ENCODE measurements at regions of chr19 and their contacts with region 1.

Region 1: DNA sequence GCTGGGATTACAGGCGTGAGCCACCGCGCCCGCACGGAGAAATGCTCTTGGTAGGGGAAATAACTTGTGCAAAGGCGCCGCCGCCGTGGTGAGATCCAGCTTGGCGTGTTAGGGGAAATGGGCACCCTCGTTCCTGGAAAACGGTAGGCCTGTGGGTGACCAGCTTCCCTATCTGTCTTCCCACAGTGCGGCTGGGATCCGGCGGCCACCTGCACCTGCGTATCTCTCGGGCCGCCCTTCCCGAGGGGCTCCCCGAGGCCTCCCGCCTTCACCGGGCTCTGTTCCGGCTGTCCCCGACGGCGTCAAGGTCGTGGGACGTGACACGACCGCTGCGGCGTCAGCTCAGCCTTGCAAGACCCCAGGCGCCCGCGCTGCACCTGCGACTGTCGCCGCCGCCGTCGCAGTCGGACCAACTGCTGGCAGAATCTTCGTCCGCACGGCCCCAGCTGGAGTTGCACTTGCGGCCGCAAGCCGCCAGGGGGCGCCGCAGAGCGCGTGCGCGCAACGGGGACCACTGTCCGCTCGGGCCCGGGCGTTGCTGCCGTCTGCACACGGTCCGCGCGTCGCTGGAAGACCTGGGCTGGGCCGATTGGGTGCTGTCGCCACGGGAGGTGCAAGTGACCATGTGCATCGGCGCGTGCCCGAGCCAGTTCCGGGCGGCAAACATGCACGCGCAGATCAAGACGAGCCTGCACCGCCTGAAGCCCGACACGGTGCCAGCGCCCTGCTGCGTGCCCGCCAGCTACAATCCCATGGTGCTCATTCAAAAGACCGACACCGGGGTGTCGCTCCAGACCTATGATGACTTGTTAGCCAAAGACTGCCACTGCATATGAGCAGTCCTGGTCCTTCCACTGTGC is 2.4 kb downstream of the GDF15 start:
- DNase-seq: peak in 1 of 2 experiments; percentile 98
- H3K4me3 ChIP-seq: peak overlapping the region in 3 of 4 experiments; percentile 17 to 46 (median 20); a peak in 5 of 8 replicates
- H3K27ac ChIP-seq: no peak overlapping the region
- H3K4me1 ChIP-seq: peaks cover 3 to 4% (median 3%) of the 10 kb centered on the region in 4 experiments
- H3K27me3 ChIP-seq: peaks cover 0 to 23% (median 14%) of the 10 kb centered on the region in 4 experiments; a peak in 6 of 7 replicates
- CTCF ChIP-seq: peak; percentile 97 to 99 (median 98)
- EP300 ChIP-seq: no peak
- POLR2A ChIP-seq: no peak
- RAD21 ChIP-seq: peak; percentile 52 to 73; a peak in 3 of 4 replicates

Region 2: GRCh38 chr19:18340190-18340989 is 47.9 kb before region 1 on chr19 and contains the start of gene PGPEP1:
- CTCF ChIA-PET with region 1: interaction called, 15 read pairs
- POLR2A ChIA-PET with region 1: interaction called, 4 read pairs
- DNase-seq: peak in 1 of 2 experiments; percentile 97
- H3K4me3 ChIP-seq: peak within 1 kb of the TSS; percentile 55 to 85 (median 62)
- H3K27ac ChIP-seq: no peak within 1 kb of the TSS
- H3K4me1 ChIP-seq: peaks cover 0 to 11% (median 7%) of the 10 kb centered on the region in 4 experiments; a peak in 6 of 7 replicates
- H3K27me3 ChIP-seq: 0 out of 7 replicates have a peak, but pooled peaks cover 0 to 2% (median 0%) of the 10 kb centered on the region in 4 experiments
- CTCF ChIP-seq: no peak
- EP300 ChIP-seq: no peak
- POLR2A ChIP-seq: 0 out of 3 replicates have a peak, but pooled peaks of 1 of the 2 experiments have one; percentile 26
- RAD21 ChIP-seq: no peak
- total RNA-seq, gene PGPEP1: 33.2 and 33.4 TPM in 2 replicates

Region 3: DNA sequence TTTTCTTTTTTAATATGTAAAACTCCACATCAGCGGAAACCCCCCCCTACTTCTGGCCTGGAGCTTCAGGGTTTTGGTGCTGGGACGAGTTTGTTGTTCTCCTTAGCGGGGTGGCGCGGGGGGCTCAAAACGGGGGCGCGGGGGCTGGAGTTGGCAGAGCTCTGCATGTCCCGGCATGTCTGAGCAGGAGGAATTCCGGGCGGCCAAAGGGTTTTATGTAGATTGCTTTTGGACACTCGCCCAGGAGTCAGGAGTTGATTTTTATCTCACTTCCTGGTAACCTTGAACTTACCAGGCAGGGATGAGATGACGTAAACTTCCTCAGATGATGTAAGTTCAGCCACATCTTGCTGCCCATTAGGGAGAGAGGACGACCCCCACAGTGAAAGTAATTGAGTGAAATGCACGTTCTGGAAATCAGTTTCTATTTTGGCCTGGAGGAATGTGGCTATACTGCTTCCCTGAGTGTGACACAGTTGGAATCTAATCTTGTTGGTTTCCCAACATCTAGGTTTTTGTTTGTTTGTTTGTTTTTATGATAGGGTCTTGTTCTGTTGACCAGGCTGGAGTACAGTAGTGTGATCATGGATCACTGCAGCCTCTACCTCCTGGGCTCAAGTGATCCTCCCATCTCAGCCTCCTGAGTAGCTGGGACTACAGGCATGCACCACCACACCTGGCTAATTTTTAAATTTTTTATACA is 23.4 kb before region 1 on chr19:
- CTCF ChIA-PET with region 1: interaction called, 69 read pairs
- POLR2A ChIA-PET with region 1: interaction called, 6 read pairs
- DNase-seq: no peak
- H3K4me3 ChIP-seq: no peak overlapping the region
- H3K27ac ChIP-seq: peak overlapping the region; percentile 87; the same call in 1 of the 2 replicates
- H3K4me1 ChIP-seq: peaks cover 1 to 14% (median 8%) of the 10 kb centered on the region in 4 experiments; a peak in 5 of 7 replicates
- H3K27me3 ChIP-seq: no peaks in the 10 kb centered on the region
- CTCF ChIP-seq: no peak
- EP300 ChIP-seq: 0 out of 3 replicates have a peak, but pooled peaks of 1 of the 2 experiments have one; percentile 14
- POLR2A ChIP-seq: no peak
- RAD21 ChIP-seq: no peak

Region 4: DNA sequence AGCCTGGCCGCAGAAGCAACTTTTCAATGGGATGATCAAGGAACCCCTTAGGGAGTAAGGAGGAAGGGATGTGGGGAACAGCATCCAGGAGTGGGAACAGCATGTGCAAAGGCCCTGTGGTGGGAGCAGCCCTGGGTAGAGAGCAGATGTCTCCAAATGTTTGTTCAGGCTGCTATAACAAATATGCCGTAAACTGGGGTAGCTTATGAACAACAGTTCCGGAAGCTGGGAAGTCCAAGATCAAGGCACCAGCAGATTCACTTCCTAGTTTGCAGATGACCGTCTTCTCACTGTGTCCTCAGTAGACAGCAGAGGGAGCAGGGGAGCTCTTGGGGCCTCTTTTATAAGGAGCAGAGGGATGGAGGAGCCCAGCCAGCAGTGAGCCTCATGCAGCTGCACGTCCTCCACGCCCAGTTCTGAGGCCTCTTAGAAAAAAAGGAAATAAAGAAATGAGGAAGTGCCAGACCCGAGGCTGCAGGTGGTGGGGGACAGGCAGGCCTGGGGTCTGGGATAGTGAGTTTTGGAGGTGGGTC is 13.3 kb after region 1 on chr19:
- CTCF ChIA-PET with region 1: interaction called, 174 read pairs
- POLR2A ChIA-PET with region 1: interaction called, 12 read pairs
- DNase-seq: no peak
- H3K4me3 ChIP-seq: no peak overlapping the region
- H3K27ac ChIP-seq: no peak overlapping the region
- H3K4me1 ChIP-seq: peaks cover 0 to 8% (median 3%) of the 10 kb centered on the region in 4 experiments; a peak in 5 of 7 replicates
- H3K27me3 ChIP-seq: peaks cover 0 to 3% (median under 1%) of the 10 kb centered on the region in 4 experiments; a peak in 3 of 7 replicates
- CTCF ChIP-seq: peak; percentile 41 to 62 (median 48)
- EP300 ChIP-seq: no peak
- POLR2A ChIP-seq: no peak
- RAD21 ChIP-seq: peak; percentile 34 to 45; a peak in 3 of 4 replicates

Measured in H1 (cell line).